B cell (primary cell): ENCODE measurements at regions of chr1 and their contacts with region 1.

Region 1: DNA sequence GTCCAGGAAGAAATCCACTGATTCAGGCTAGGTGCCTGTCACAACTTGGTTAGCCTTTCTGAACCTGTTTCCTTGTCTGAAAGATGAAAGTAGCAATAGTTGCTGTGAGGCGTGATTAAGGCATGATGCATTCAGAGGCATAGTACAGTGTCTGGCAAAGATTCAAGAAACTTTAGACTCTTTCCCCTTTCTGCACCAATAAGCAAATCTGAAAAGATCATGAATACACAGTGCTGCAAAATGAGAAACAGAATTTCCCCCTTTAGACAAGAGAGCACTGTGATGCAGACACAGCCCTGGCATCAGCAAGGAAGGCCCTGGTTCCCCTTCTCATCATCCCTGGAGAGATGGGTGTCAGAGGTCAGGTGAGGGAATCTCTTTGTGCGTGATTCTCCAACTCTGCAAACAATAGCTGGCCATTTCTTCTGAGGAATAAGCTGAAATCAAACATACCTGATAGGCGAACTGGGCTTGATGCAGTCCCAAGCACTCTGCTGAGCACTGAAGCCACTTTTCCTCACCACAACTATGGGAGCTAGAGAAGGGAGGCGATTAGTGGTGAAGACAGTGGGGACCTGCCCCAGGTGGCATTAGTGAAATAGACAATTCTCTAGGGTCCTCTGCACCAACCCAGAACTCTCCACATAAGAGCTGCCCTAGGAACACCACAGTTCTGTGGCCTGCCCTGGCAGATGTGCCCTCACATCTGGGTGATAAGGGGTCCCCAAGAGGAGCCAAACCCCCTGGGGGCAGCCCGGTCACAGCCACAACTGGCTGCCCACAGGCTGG is 41.7 kb downstream of the ITPKB start:
- DNase-seq: peak; percentile 88
- ATAC-seq: peak; percentile 83
- H3K4me3 ChIP-seq: peak overlapping the region in 1 of 5 experiments; percentile 4
- H3K4me3 Mint-ChIP-seq: peak overlapping the region; percentile 75
- H3K27ac ChIP-seq: peak overlapping the region; percentile 93 to 94
- H3K27ac Mint-ChIP-seq: peak overlapping the region; percentile 95
- H3K4me1 ChIP-seq: peaks cover 86 to 93% of the 10 kb centered on the region in 2 donors
- H3K4me1 Mint-ChIP-seq: peaks cover 89% of the 10 kb centered on the region
- H3K27me3 ChIP-seq: no peaks in the 10 kb centered on the region
- H3K27me3 Mint-ChIP-seq: no peaks in the 10 kb centered on the region
- CTCF ChIP-seq: no peak

Region 2: GRCh38 chr1:226711976-226712741 is 14.8 kb after region 1 on chr1:
- CTCF ChIA-PET with region 1: interaction called, 8 read pairs
- POLR2A ChIA-PET with region 1: interaction called, 6 read pairs
- intact Hi-C with region 1: loop called (anchors 2 kb)
- DNase-seq: peak; percentile 50
- ATAC-seq: peak; percentile 75
- H3K4me3 ChIP-seq: peak overlapping the region in 4 of 5 experiments; percentile 18 to 57 (median 22)
- H3K4me3 Mint-ChIP-seq: peak overlapping the region; percentile 56
- H3K27ac ChIP-seq: peak overlapping the region; percentile 70 to 84
- H3K27ac Mint-ChIP-seq: peak overlapping the region; percentile 76
- H3K4me1 ChIP-seq: peaks cover 59 to 73% of the 10 kb centered on the region in 2 donors
- H3K4me1 Mint-ChIP-seq: peaks cover 78% of the 10 kb centered on the region
- H3K27me3 ChIP-seq: no peaks in the 10 kb centered on the region
- H3K27me3 Mint-ChIP-seq: no peaks in the 10 kb centered on the region
- CTCF ChIP-seq: no peak